ENCODE measurements at regions of chr1 and their contacts with region 1.

Region 1: DNA sequence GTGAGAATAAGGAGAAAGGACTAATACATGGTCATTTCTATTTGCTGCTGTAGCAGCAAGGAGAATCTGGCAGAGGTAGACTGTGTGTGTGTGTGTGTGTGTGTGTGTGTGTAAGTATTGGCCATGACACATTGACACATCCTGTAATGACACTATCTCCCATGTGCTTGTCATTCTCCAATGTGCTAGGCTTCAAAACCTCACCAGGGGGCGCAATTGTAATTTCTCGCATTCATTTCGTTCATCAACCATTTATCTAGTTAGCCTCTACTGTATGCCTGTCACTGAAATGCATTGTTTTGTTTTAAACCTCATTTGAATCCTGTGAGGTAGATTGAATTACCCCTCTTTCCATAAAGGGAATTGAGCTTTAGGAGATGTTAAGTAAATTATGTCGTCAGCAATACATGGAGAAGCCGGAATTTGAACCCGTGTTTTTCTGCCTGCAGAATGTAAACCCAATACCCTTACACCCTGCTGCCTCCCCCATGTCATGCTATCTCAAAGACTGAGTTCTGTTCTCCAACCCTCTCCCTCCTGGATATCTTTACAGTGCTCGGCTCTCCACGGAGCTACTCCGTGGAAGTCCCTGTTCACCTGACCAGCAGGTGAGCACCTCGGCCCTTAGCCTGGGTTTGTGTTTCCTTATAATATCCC is 100.8 kb downstream of the UCK2 start:
- DNase-seq: peak; percentile 43
- ATAC-seq: peak; percentile 48
- H3K4me3 ChIP-seq: no peak overlapping the region
- H3K27ac ChIP-seq: no peak overlapping the region
- H3K4me1 ChIP-seq: peaks cover 7% of the 10 kb centered on the region
- H3K27me3 ChIP-seq: no peaks in the 10 kb centered on the region; a peak in 1 of 5 replicates
- CTCF ChIP-seq: peak; percentile 75
- EP300 ChIP-seq: no peak
- POLR2A ChIP-seq: no peak
- RAD21 ChIP-seq: 0 out of 2 replicates have a peak, but pooled peaks have one; percentile 12

Region 2: GRCh38 chr1:166166695-166167571 is 238.7 kb after region 1 on chr1 and contains the start of gene FAM78B:
- CTCF ChIA-PET with region 1: no interaction called
- POLR2A ChIA-PET with region 1: no interaction called
- in situ Hi-C with region 1: no loop called
- intact Hi-C with region 1: loop called (anchors 5 kb)
- DNase-seq: peak; percentile 54
- ATAC-seq: peak; percentile 89
- H3K4me3 ChIP-seq: peak within 1 kb of the TSS; percentile 49 to 69 (median 64)
- H3K27ac ChIP-seq: no peak within 1 kb of the TSS
- H3K4me1 ChIP-seq: peaks cover 17% of the 10 kb centered on the region
- H3K27me3 ChIP-seq: peaks cover 2 to 26% of the 10 kb centered on the region in 2 experiments; a peak in 3 of 5 replicates
- CTCF ChIP-seq: no peak
- EP300 ChIP-seq: no peak
- POLR2A ChIP-seq: no peak
- RAD21 ChIP-seq: no peak
- total RNA-seq, gene FAM78B: 0.29 and 0.31 TPM in 2 replicates

Region 3: DNA sequence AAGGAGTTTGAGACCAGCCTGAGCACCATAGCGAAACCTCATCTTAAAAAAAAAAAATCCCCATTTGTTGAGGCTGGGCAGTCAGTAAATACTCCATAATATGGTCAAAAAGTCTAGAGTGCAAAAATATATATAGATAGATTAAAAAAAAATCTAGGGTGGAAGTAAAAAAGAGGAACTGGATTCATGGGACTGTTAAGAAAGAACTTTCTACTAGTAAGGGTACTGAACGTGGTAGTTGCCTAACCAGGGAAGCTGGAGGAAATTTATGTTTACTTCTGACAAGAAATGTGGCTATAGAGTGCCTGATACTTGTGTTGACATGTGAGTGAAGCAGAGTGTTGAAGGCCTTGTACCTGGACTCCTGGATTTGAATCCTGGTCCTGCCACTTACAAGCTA is 504.5 kb after region 1 on chr1:
- CTCF ChIA-PET with region 1: interaction called, 16 read pairs
- POLR2A ChIA-PET with region 1: no interaction called
- in situ Hi-C with region 1: loop called (anchors 10 kb)
- intact Hi-C with region 1: no loop called
- DNase-seq: no peak
- ATAC-seq: no peak
- H3K4me3 ChIP-seq: no peak overlapping the region
- H3K27ac ChIP-seq: no peak overlapping the region
- H3K4me1 ChIP-seq: no peaks in the 10 kb centered on the region
- H3K27me3 ChIP-seq: no peaks in the 10 kb centered on the region
- CTCF ChIP-seq: no peak
- EP300 ChIP-seq: no peak
- POLR2A ChIP-seq: no peak
- RAD21 ChIP-seq: no peak

Region 4: GRCh38 chr1:166479052-166479631 is 550.9 kb after region 1 on chr1:
- CTCF ChIA-PET with region 1: interaction called, 6 read pairs
- POLR2A ChIA-PET with region 1: no interaction called
- in situ Hi-C with region 1: no loop called
- intact Hi-C with region 1: loop called (anchors 2 kb)
- DNase-seq: peak; percentile 30
- ATAC-seq: no peak; the same call in 2 of the 3 replicates
- H3K4me3 ChIP-seq: no peak overlapping the region
- H3K27ac ChIP-seq: no peak overlapping the region
- H3K4me1 ChIP-seq: no peaks in the 10 kb centered on the region
- H3K27me3 ChIP-seq: no peaks in the 10 kb centered on the region
- CTCF ChIP-seq: peak; percentile 74
- EP300 ChIP-seq: no peak
- POLR2A ChIP-seq: no peak
- RAD21 ChIP-seq: 0 out of 2 replicates have a peak, but pooled peaks have one; percentile 25